Adrenal gland (tissue), 19 donors: ENCODE measurements at regions of chr14 and their contacts with region 1.

Region 1: GRCh38 chr14:76918751-76919543 is 92.7 kb downstream of the LRRC74A start:
- DNase-seq: peak; percentile 94 to 98 (median 97)
- H3K4me3 ChIP-seq: no peak overlapping the region
- H3K27ac ChIP-seq: peak overlapping the region; percentile 73 to 96 (median 92)
- H3K4me1 ChIP-seq: peaks cover 37 to 63% of the 10 kb centered on the region in 2 donors
- H3K27me3 ChIP-seq: no peaks in the 10 kb centered on the region
- CTCF ChIP-seq: peak in 4 of 6 experiments; percentile 18 to 34 (median 30)
- POLR2A ChIP-seq: peak in 1 of 2 donors; percentile 70

Region 2: GRCh38 chr14:76956316-76957090 is 37.6 kb after region 1 on chr14:
- intact Hi-C with region 1: loop called (anchors 5 kb)
- DNase-seq: peak; percentile 95 to 98 (median 96)
- H3K4me3 ChIP-seq: peak overlapping the region in 1 of 4 donors; percentile 32
- H3K27ac ChIP-seq: peak overlapping the region; percentile 96 to 99 (median 97)
- H3K4me1 ChIP-seq: peaks cover 42 to 52% of the 10 kb centered on the region in 2 donors
- H3K27me3 ChIP-seq: no peaks in the 10 kb centered on the region
- CTCF ChIP-seq: peak in 4 of 6 experiments; percentile 30 to 61 (median 38)
- POLR2A ChIP-seq: peak; percentile 35 to 65

Region 3: GRCh38 chr14:77028384-77029231 is 109.7 kb after region 1 on chr14 and contains the start of gene IRF2BPL:
- intact Hi-C with region 1: loop called (anchors 5 kb)
- DNase-seq: peak; percentile 99 to 100 (median 99)
- H3K4me3 ChIP-seq: peak within 1 kb of the TSS in 3 of 4 donors; percentile 85 to 90 (median 86)
- H3K27ac ChIP-seq: peak within 1 kb of the TSS; percentile 99 to 100 (median 99)
- H3K4me1 ChIP-seq: peaks cover 52 to 66% of the 10 kb centered on the region in 2 donors
- H3K27me3 ChIP-seq: no peaks in the 10 kb centered on the region
- CTCF ChIP-seq: peak in 1 of 6 experiments; percentile 29
- POLR2A ChIP-seq: peak; percentile 95 to 98
- total RNA-seq, gene IRF2BPL: 20.3 to 104 (median 85.1) TPM